Activated CD4-positive, alpha-beta T cell treated with anti-CD3 and anti-CD28 coated beads for 36 hours (primary cell): ENCODE measurements at regions of chr4 and their contacts with region 1.

Region 1: DNA sequence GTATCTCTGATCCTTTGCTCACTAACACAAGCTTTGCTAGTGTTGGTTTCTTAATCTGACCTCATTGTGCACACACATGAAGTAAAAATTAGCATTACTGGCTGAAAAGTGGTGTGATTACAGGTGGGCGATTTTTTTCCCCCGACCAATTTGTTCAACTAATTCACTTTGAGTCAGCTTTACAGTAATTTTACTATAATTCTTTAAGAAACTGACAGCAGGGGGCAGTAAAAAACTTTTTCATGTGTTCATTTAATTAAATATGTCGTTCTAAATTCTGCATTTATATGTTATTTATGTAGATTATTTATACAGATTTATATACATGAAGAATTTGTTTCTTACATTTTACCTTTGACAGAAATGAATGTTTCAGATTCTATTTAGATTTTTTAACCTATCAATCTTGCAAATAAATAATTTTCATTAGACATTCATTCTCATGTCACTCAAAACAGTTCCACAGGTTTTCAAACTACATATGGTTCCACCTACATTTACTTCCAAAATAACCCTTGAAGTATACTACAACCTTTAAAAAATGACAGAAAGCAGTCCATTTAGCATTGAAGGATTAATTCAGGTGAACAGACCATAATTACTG is 17.5 kb downstream of the PALLD start:
- DNase-seq: no peak
- ATAC-seq: no peak
- H3K4me3 Mint-ChIP-seq: no peak overlapping the region
- H3K27ac Mint-ChIP-seq: no peak overlapping the region
- H3K4me1 Mint-ChIP-seq: peaks cover 33% of the 10 kb centered on the region
- H3K27me3 Mint-ChIP-seq: no peaks in the 10 kb centered on the region

Region 2: GRCh38 chr4:168183717-168184608 is 330.4 kb before region 1 on chr4:
- CTCF ChIA-PET with region 1: interaction called, 5 read pairs
- POLR2A ChIA-PET with region 1: no interaction called
- intact Hi-C with region 1: loop called (anchors 2 kb)
- DNase-seq: no peak
- ATAC-seq: no peak
- H3K4me3 Mint-ChIP-seq: no peak overlapping the region
- H3K27ac Mint-ChIP-seq: no peak overlapping the region
- H3K4me1 Mint-ChIP-seq: peaks cover 4% of the 10 kb centered on the region
- H3K27me3 Mint-ChIP-seq: no peaks in the 10 kb centered on the region

Region 3: GRCh38 chr4:168421671-168422070 is 92.7 kb before region 1 on chr4:
- CTCF ChIA-PET with region 1: no interaction called
- POLR2A ChIA-PET with region 1: no interaction called
- intact Hi-C with region 1: no loop called
- DNase-seq: peak; percentile 29
- ATAC-seq: peak; percentile 77
- H3K4me3 Mint-ChIP-seq: peak overlapping the region; percentile 14
- H3K27ac Mint-ChIP-seq: peak overlapping the region; percentile 64
- H3K4me1 Mint-ChIP-seq: peaks cover 11% of the 10 kb centered on the region
- H3K27me3 Mint-ChIP-seq: no peaks in the 10 kb centered on the region

Region 4: GRCh38 chr4:168480931-168481611 is 33.3 kb before region 1 on chr4:
- CTCF ChIA-PET with region 1: interaction called, 4 read pairs
- POLR2A ChIA-PET with region 1: no interaction called
- intact Hi-C with region 1: loop called (anchors 1 kb)
- DNase-seq: peak; percentile 51
- ATAC-seq: peak; percentile 66
- H3K4me3 Mint-ChIP-seq: peak overlapping the region; percentile 80
- H3K27ac Mint-ChIP-seq: peak overlapping the region; percentile 95
- H3K4me1 Mint-ChIP-seq: peaks cover 64% of the 10 kb centered on the region
- H3K27me3 Mint-ChIP-seq: no peaks in the 10 kb centered on the region

Region 5: GRCh38 chr4:168551945-168552695 is 37.8 kb after region 1 on chr4:
- CTCF ChIA-PET with region 1: no interaction called
- POLR2A ChIA-PET with region 1: no interaction called
- intact Hi-C with region 1: loop called in 1 of 2 experiments (anchors 5 kb)
- DNase-seq: no peak
- ATAC-seq: peak; percentile 74
- H3K4me3 Mint-ChIP-seq: no peak overlapping the region
- H3K27ac Mint-ChIP-seq: no peak overlapping the region
- H3K4me1 Mint-ChIP-seq: peaks cover 2% of the 10 kb centered on the region
- H3K27me3 Mint-ChIP-seq: no peaks in the 10 kb centered on the region

Region 6: GRCh38 chr4:168831919-168832762 is 317.8 kb after region 1 on chr4:
- CTCF ChIA-PET with region 1: no interaction called
- POLR2A ChIA-PET with region 1: no interaction called
- intact Hi-C with region 1: loop called in 1 of 2 experiments (anchors 2 kb)
- DNase-seq: peak; percentile 83
- ATAC-seq: peak; percentile 92
- H3K4me3 Mint-ChIP-seq: peak overlapping the region; percentile 72
- H3K27ac Mint-ChIP-seq: peak overlapping the region; percentile 48
- H3K4me1 Mint-ChIP-seq: peaks cover 15% of the 10 kb centered on the region
- H3K27me3 Mint-ChIP-seq: peaks cover 37% of the 10 kb centered on the region

Region 7: GRCh38 chr4:168907119-168907698 is 392.9 kb after region 1 on chr4:
- CTCF ChIA-PET with region 1: no interaction called
- POLR2A ChIA-PET with region 1: no interaction called
- intact Hi-C with region 1: no loop called
- DNase-seq: no peak
- ATAC-seq: no peak
- H3K4me3 Mint-ChIP-seq: no peak overlapping the region
- H3K27ac Mint-ChIP-seq: no peak overlapping the region
- H3K4me1 Mint-ChIP-seq: no peaks in the 10 kb centered on the region
- H3K27me3 Mint-ChIP-seq: no peaks in the 10 kb centered on the region

Region 8: GRCh38 chr4:169485791-169486742 is 971.7 kb after region 1 on chr4:
- CTCF ChIA-PET with region 1: no interaction called
- POLR2A ChIA-PET with region 1: no interaction called
- intact Hi-C with region 1: loop called in 1 of 2 experiments (anchors 5 kb)
- DNase-seq: peak; percentile 53
- ATAC-seq: peak; percentile 49
- H3K4me3 Mint-ChIP-seq: no peak overlapping the region
- H3K27ac Mint-ChIP-seq: no peak overlapping the region
- H3K4me1 Mint-ChIP-seq: no peaks in the 10 kb centered on the region
- H3K27me3 Mint-ChIP-seq: no peaks in the 10 kb centered on the region